T-cell (primary cell): ENCODE measurements at regions of chr2 and their contacts with region 1.

Region 1: DNA sequence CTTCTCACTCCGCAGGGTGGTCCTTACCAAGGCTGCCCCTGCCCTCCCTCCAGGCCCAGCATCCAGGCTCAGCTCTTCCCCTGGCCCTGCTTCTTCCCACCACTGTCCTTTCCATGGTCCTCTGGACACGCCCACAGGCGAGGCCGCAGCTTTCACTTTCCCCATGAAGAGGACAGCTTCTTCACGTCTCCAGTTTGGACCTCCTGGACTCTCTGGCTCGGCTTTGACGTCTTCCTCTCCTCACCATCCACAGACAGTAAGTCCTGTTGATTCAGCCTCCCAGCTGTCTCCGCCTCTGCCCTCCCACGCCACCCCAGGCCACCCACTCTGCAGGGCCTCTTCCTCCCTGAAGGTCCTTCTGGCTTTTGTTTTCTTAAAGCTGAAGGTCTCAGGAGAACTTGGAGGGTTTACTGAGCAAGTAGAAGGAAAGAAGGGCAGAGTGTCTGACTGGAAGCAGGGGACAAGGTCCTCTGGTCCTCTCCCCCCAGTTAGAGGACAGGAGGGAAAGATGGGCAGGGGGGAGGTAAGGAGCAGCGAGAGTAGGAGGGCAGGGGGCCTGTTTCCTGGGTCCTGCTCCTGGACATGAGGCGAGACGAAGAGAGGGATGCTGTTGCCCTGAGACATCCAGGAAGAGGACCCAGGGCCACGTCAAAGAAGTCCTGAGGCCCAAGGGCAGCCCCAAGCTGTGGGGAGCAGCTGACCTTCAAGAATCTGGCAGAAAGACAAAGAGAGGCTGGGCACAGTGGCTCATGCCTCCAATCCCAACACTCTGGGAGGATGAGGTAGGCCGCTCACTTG is 24.7 kb upstream of the NMUR1 start:
- DNase-seq: peak in 2 of 35 experiments; percentile 15 to 32
- ATAC-seq: no peak
- H3K4me3 ChIP-seq: peak overlapping the region in 1 of 2 donors; percentile 11
- H3K4me3 Mint-ChIP-seq: peak overlapping the region; percentile 43 to 59 (median 57)
- H3K27ac ChIP-seq: peak overlapping the region; percentile 60
- H3K27ac Mint-ChIP-seq: peak overlapping the region; percentile 75 to 80
- H3K4me1 ChIP-seq: peaks cover 2 to 35% of the 10 kb centered on the region in 2 experiments
- H3K4me1 Mint-ChIP-seq: peaks cover 12 to 31% (median 17%) of the 10 kb centered on the region in 3 donors
- H3K27me3 ChIP-seq: no peaks in the 10 kb centered on the region
- H3K27me3 Mint-ChIP-seq: no peaks in the 10 kb centered on the region

Region 2: GRCh38 chr2:231531466-231532217 is 23.3 kb before region 1 on chr2:
- CTCF ChIA-PET with region 1: interaction called, 5 to 12 read pairs
- POLR2A ChIA-PET with region 1: no interaction called
- DNase-seq: peak in 2 of 35 experiments; percentile 22 to 24
- ATAC-seq: no peak
- H3K4me3 ChIP-seq: no peak overlapping the region
- H3K4me3 Mint-ChIP-seq: peak overlapping the region in 1 of 3 donors; percentile 73
- H3K27ac ChIP-seq: no peak overlapping the region
- H3K27ac Mint-ChIP-seq: no peak overlapping the region
- H3K4me1 ChIP-seq: peaks cover 0 to 56% of the 10 kb centered on the region in 2 experiments
- H3K4me1 Mint-ChIP-seq: peaks cover 9 to 39% (median 17%) of the 10 kb centered on the region in 3 donors
- H3K27me3 ChIP-seq: peaks cover 0 to 15% of the 10 kb centered on the region in 2 experiments
- H3K27me3 Mint-ChIP-seq: peaks cover 6 to 7% of the 10 kb centered on the region in 2 donors

Region 3: DNA sequence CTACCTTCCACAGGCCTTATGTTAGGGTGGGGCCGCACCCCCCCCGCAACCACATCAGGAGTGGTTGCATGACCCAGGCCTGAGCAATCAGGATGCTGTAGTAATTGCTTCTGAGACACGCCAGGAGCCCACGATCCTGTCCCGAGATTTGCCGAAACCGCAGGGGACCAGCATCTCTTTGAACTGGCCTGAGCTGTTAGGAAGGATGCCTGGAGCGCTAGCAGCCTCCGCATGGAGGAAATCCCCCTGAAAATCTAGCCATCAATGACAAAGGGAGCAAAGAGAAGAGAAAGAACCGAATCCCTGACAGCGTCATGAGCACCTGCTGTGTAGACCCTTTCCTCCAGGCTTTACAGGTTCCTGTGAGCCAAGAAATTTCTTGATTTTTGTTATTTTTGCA is 29.0 kb after region 1 on chr2:
- CTCF ChIA-PET with region 1: no interaction called
- POLR2A ChIA-PET with region 1: no interaction called
- DNase-seq: no peak
- ATAC-seq: no peak
- H3K4me3 ChIP-seq: no peak overlapping the region
- H3K4me3 Mint-ChIP-seq: no peak overlapping the region
- H3K27ac ChIP-seq: no peak overlapping the region
- H3K27ac Mint-ChIP-seq: no peak overlapping the region
- H3K4me1 ChIP-seq: no peaks in the 10 kb centered on the region
- H3K4me1 Mint-ChIP-seq: no peaks in the 10 kb centered on the region
- H3K27me3 ChIP-seq: peaks cover 0 to 3% of the 10 kb centered on the region in 2 experiments
- H3K27me3 Mint-ChIP-seq: peaks cover 0 to 5% of the 10 kb centered on the region in 2 donors

Region 4: DNA sequence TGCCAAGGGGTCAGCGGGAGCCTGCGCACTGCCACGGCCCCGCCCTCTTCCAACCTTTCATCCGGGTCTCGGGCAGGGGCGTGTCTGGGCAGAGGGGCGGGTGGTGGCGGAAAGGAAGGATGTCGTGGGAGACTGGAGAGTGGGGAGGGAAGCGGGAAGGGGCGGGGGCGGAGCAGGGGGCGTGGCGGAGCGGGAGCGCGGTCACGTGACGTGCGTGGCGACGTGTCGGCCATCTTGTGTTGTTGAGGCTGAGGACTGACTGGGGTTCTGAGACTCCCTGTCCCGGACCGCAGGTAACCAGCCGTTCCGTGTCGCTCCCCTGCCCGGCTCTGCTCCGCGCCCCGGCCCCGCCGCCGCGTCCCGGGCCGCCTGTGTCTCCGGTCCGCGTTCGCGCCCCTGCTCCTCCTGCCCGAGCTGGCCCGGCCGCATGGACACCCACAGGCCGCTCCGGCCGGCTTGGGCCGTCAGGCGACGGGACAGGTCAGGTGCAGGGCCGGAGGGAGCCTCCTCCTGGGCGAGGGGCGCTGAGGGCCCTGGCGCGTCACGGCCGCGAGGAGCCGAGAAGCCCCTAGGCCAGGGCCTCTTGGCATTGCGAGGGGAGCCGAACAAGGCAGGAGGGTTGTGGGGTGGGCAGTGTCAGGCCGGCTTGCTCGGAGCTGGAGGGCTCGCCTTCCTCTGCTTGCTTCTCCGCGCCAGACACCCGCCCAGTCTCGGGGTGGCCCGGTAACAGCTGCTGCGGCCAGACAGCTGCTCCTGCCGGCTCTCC is 1142.3 kb after region 1 on chr2 and contains the start of gene GIGYF2:
- CTCF ChIA-PET with region 1: no interaction called
- POLR2A ChIA-PET with region 1: no interaction called
- DNase-seq: peak; percentile 79 to 95 (median 87)
- ATAC-seq: peak; percentile 87 to 92 (median 90)
- H3K4me3 ChIP-seq: peak within 1 kb of the TSS; percentile 91 to 94
- H3K4me3 Mint-ChIP-seq: peak within 1 kb of the TSS; percentile 89 to 93 (median 93)
- H3K27ac ChIP-seq: peak within 1 kb of the TSS; percentile 72
- H3K27ac Mint-ChIP-seq: peak within 1 kb of the TSS; percentile 70 to 82
- H3K4me1 ChIP-seq: peaks cover 26 to 32% of the 10 kb centered on the region in 2 experiments
- H3K4me1 Mint-ChIP-seq: peaks cover 32 to 42% (median 35%) of the 10 kb centered on the region in 3 donors
- H3K27me3 ChIP-seq: no peaks in the 10 kb centered on the region
- H3K27me3 Mint-ChIP-seq: no peaks in the 10 kb centered on the region
- total RNA-seq, gene GIGYF2: 57.8 to 76.8 (median 68.7) TPM